Endothelial cell of umbilical vein (primary cell): ENCODE measurements at regions of chr3 and their contacts with region 1.

Region 1: DNA sequence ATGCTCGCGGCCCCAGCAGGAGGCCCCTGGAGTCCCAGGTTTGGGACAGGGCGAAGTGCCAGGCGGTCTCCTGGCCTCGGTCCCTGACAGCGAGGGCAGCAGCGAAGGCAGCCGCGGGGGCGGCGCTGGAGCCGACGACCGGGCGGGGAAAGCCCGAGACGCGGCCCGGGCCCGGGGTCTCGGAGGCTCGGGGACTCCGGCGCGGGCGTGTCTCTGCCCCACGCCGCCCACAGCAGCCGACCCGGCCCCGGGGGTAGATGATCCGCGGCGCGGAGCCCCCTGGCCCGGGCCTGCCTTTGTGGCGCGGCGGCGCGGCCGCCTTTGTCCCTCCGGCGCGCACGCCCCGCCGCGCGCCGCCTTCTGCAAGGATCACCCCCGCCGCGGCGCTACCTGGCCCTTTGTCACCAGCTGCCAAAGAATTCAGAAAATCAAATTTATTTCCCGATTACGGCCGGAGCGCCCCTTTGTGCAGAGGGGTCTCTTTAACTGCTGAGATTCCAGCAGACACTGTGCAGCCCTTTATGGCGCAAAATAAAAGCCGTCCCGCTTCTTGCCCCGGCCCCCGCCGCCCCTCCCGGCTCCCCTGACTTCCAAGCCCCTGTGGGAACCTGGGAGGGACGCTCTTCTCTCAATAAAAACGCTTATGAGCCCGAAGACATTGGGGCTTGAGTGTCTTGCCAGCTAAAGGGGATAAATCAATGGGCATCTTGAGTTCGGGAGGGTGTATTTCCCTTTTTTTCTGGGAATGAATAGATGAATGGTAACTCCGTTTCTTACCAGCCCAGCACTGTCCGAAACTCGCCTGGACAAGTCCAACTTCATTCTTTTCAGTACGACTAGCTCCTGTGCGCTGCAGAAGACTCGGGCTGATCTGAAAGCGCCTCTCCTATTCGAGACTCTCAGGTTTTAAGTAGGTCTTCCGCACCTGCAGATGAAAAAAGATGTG is 68.4 kb downstream of the HES1 start:
- DNase-seq: no peak
- H3K4me3 ChIP-seq: peak overlapping the region; percentile 22 to 31 (median 28)
- H3K27ac ChIP-seq: no peak overlapping the region
- H3K4me1 ChIP-seq: peaks cover 17% of the 10 kb centered on the region
- H3K27me3 ChIP-seq: no peaks in the 10 kb centered on the region
- CTCF ChIP-seq: no peak
- POLR2A ChIP-seq: no peak

Region 2: DNA sequence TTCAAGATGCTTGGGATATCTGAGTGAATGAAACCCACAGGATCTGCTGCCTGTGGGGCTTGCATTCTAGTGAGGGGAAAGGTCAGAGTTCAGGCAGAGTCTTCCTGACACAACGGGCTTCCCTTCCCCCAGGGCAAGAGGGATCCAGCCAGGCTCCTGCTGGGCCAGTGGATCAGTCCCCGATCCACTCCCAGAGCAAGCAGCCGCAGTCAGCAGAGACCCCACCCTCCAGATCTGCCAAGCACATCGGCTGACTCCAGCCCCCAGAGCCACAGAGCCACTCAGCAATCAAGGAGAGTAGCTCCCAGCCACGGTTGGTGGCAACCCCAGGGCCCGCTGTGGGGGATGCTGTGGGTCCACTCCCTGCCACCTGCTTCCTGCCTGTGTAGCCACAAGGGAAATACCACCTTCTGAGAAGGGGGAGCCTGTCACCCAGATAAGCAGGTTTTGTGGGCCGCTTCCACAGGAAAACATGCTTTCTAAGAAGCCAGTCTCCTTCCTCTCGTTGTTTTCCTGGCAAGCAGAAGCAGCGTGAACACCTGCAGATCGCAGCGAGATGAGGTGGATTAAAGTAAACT is 101.9 kb after region 1 on chr3:
- CTCF ChIA-PET with region 1: no interaction called
- POLR2A ChIA-PET with region 1: no interaction called
- dilution Hi-C with region 1: no loop called
- intact Hi-C with region 1: loop called (anchors 2 kb)
- DNase-seq: peak; percentile 89
- H3K4me3 ChIP-seq: no peak overlapping the region
- H3K27ac ChIP-seq: no peak overlapping the region
- H3K4me1 ChIP-seq: peaks cover 14% of the 10 kb centered on the region
- H3K27me3 ChIP-seq: peaks cover 2% of the 10 kb centered on the region in 2 experiments
- CTCF ChIP-seq: no peak
- POLR2A ChIP-seq: no peak